ENCODE measurements at regions of chr3 and their contacts with region 1.

Region 1: DNA sequence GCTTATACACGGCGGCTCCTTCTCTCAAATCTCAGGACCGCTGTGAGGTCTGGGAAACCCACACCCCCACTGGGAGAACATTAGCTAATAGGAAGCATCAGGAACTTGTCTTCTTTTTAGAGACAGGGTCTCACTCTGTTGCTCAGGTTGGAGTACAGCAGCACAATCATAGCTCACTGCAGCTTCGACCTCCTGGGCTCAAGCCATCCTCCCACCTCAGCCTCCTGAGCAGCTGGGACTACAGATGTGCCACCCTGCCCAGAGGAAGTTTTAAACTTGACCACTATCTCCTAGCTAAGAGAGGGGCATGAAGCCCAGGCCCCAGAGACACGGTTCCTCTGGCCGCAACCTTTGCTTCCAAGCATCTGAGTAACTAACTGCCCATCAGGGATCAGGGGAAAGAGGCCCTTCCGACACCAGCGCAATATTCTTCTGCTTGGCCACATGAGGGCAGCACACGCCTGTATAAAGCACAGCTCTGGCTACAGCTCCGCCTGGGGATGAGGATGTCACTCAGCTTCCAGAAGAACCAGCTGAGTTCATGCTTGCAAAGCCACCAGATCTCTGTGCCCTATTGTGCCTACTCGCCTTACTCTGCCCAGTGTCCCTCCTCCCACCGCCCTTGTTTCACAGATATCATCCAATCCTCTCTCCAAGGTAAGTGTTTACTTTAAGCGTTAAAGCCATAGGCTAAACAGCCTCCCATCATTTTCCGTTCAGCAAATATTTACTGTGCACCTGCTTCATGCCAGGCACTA is 57.5 kb upstream of the SLC6A11 start:
- DNase-seq: peak; percentile 65
- H3K4me3 ChIP-seq: no peak overlapping the region
- H3K27ac ChIP-seq: no peak overlapping the region
- H3K4me1 ChIP-seq: no peaks in the 10 kb centered on the region
- H3K27me3 ChIP-seq: no peaks in the 10 kb centered on the region
- CTCF ChIP-seq: peak; percentile 61 to 76
- POLR2A ChIP-seq: no peak

Region 2: DNA sequence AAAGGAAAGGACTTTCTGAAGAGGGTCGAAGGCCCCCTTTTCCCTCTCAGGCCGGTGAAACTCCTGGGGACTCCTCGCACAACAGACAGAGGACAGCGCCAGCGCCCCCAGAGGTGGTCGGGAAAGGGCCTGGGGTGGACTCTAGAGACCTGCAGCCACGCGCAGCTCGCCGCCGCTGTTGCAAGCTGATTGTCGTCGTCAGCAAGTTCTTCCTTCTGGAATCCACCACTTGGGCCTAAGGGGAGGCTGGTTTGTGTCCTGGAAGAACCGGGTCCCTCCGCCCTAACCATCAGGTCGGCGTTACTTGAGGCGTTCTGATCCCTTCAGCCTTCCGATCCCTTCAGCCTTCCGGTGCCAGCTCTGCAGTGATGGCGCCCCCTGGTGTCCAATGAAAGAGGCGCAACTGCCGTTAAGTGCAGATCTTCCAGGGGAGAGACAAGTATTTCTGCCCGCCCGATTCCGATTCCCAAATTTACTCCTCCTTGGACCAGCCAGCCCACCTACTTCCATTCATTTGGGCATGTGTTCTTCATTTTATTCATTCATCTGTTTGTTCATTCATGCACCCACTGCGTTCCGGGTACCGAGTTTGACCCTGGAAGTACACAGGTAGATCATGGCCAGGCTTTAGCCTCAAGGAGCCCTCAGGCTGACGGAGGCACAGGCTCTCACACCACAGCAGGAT is 19.7 kb before region 1 on chr3:
- CTCF ChIA-PET with region 1: interaction called, 33 read pairs
- POLR2A ChIA-PET with region 1: no interaction called
- dilution Hi-C with region 1: no loop called
- intact Hi-C with region 1: no loop called
- DNase-seq: peak; percentile 70
- H3K4me3 ChIP-seq: peak overlapping the region in 1 of 3 experiments; percentile 18
- H3K27ac ChIP-seq: no peak overlapping the region
- H3K4me1 ChIP-seq: no peaks in the 10 kb centered on the region
- H3K27me3 ChIP-seq: peaks cover 0 to 5% of the 10 kb centered on the region in 2 experiments
- CTCF ChIP-seq: peak; percentile 75 to 89
- POLR2A ChIP-seq: no peak

Region 3: DNA sequence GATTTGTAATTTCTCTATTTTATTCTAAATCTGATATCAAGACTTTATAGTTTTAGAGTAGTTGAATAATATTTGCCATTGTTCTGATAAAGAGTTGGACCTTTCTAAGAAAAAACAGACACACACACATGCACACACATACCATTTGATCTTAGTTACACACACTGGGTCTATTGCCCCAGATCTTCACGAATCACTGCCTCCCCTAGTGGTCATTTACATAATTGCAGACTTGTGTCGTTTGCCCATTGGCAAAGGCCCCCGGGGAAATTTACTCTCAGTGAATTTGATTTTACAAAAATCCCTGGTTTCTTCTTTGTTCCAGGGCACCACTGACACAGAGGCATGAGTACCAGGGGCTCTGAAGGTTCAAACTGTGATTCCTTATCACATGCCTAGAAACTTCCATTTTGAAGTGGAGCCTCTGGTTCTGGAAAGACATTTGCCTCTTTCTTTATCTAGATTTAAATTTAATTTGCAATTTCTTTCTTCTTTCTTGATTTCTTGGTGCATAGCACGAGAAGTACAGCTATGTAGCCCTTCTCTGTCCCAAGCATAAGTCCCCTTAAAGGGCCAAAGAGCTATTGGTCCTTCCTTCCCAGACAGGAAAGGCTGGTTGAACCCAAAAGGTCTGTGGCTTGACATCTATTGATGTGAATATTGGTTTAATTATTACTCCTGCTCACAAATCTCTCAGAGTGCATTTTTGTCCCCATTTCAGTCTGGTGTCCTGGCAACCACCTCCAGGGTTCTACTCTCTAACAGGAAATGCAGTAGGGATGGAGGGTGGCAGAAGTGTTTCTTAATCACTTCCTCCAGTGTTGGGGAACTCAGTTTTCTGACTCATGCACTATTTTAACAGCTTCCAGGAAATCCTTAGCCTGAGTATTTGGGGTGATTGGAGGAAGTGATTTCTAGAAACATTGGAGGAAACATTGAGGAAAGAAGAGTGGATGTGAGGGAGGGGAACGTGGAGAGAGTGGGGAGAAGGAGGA is 25.2 kb after region 1 on chr3:
- CTCF ChIA-PET with region 1: interaction called, 16 read pairs
- POLR2A ChIA-PET with region 1: no interaction called
- dilution Hi-C with region 1: no loop called
- intact Hi-C with region 1: loop called (anchors 1 kb)
- DNase-seq: peak; percentile 33
- H3K4me3 ChIP-seq: no peak overlapping the region
- H3K27ac ChIP-seq: no peak overlapping the region
- H3K4me1 ChIP-seq: peaks cover 3% of the 10 kb centered on the region
- H3K27me3 ChIP-seq: no peaks in the 10 kb centered on the region
- CTCF ChIP-seq: peak; percentile 61 to 72
- POLR2A ChIP-seq: no peak

Region 4: DNA sequence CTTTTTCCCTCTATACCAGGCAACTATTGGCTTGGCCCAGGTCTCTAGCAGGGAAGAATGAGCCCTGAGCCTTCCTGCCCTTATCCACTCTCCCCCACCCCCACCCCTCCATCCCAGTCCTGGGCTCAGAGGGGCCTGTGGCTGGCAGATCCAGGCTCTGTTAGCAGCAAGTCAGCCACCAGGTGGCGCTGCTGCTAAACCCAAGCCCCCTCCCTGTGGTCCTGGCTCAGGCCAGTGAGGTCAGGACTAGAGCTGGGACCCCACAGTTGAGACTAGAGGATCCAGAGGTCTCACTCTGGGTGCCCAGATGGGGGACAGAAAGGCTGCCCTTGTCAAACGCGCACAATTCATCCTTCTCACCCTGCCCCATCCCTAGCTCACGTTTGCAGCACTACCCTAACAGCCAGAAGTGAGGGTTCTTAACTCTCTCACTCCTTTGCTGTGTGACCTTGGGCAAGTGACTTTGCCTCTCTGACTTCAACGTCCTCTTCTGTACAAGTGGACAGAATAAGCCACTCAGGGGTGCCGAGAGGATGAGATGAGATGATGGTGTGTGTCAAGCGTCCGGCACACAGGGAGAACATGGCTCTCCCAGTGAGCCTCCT is 187.3 kb after region 1 on chr3:
- CTCF ChIA-PET with region 1: interaction called, 42 read pairs
- POLR2A ChIA-PET with region 1: no interaction called
- dilution Hi-C with region 1: no loop called
- intact Hi-C with region 1: loop called (anchors 1 kb)
- DNase-seq: peak; percentile 43
- H3K4me3 ChIP-seq: no peak overlapping the region
- H3K27ac ChIP-seq: no peak overlapping the region
- H3K4me1 ChIP-seq: no peaks in the 10 kb centered on the region
- H3K27me3 ChIP-seq: no peaks in the 10 kb centered on the region
- CTCF ChIP-seq: peak; percentile 71 to 91
- POLR2A ChIP-seq: no peak

Region 5: GRCh38 chr3:11211531-11212298 is 453.2 kb after region 1 on chr3:
- CTCF ChIA-PET with region 1: no interaction called
- POLR2A ChIA-PET with region 1: no interaction called
- dilution Hi-C with region 1: no loop called
- intact Hi-C with region 1: loop called (anchors 10 kb)
- DNase-seq: peak; percentile 35
- H3K4me3 ChIP-seq: no peak overlapping the region
- H3K27ac ChIP-seq: peak overlapping the region; percentile 83
- H3K4me1 ChIP-seq: peaks cover 48% of the 10 kb centered on the region
- H3K27me3 ChIP-seq: no peaks in the 10 kb centered on the region
- CTCF ChIP-seq: peak in 1 of 2 donors; percentile 14
- POLR2A ChIP-seq: no peak